ENCODE measurements at regions of chr15 and their contacts with region 1.

Region 1: GRCh38 chr15:99305761-99306505 is 54.7 kb downstream of the LRRC28 start:
- DNase-seq: peak; percentile 22 to 92
- H3K4me3 ChIP-seq: peak overlapping the region; percentile 11 to 43
- H3K27ac ChIP-seq: peak overlapping the region; percentile 76 to 81
- H3K4me1 ChIP-seq: peaks cover 0 to 6% of the 10 kb centered on the region in 2 donors
- H3K27me3 ChIP-seq: no peaks in the 10 kb centered on the region
- CTCF ChIP-seq: no peak

Region 2: GRCh38 chr15:99322643-99323405 is 16.9 kb after region 1 on chr15:
- intact Hi-C with region 1: loop called (anchors 2 kb)
- DNase-seq: no peak
- H3K4me3 ChIP-seq: no peak overlapping the region
- H3K27ac ChIP-seq: peak overlapping the region; percentile 83 to 86
- H3K4me1 ChIP-seq: peaks cover 3 to 18% of the 10 kb centered on the region in 2 donors
- H3K27me3 ChIP-seq: no peaks in the 10 kb centered on the region
- CTCF ChIP-seq: no peak

Region 3: GRCh38 chr15:100394736-100395440 is 1089.0 kb after region 1 on chr15:
- intact Hi-C with region 1: no loop called
- DNase-seq: no peak
- H3K4me3 ChIP-seq: no peak overlapping the region
- H3K27ac ChIP-seq: no peak overlapping the region
- H3K4me1 ChIP-seq: no peaks in the 10 kb centered on the region
- H3K27me3 ChIP-seq: no peaks in the 10 kb centered on the region
- CTCF ChIP-seq: no peak